ENCODE measurements at regions of chr4 and their contacts with region 1.

Region 1: DNA sequence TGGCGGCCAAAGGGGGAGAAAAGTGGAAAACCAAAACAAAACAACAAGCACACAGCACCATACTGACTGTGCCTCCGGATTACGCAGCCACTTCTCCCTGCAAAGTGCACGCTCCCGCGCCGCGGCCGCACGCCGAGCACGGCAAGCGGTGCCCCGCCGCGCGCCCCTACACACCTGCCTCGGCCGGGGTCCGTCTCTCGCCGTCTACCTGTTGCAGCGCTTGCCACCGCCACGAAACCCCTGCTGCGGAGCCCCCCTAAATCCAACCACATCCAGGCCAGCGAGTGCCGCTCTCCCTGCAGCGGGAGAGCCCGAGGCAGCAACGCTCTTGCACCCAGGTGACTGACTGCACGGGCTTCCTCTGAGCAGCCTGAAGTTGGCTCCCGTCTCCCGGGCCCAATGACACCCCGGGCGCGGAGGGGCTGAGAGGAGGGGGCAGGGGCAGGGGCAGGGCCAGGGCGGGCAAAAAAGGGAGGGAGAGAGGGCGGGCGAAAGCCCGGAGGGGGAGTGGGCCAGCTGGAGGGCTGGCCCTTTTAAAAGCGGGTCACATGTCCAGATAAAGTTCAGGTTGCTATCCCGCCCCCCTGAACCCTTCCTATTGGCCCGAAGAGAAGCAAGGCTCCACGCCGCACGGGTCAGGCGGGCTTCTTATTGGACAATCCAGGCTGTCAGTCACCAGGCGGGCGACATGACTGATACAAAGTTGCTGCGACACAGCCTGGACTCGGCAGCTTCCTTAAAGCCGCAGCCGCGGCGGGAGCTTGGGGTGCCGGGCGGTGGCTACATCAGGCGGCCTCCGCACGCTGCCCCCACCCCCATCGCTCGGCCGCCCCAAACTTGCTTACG is at the start of gene NR3C2:
- DNase-seq: peak; percentile 97
- ATAC-seq: peak; percentile 95
- total RNA-seq, gene NR3C2: 23.6 TPM

Region 2: GRCh38 chr4:147924604-147925412 is 517.4 kb before region 1 on chr4:
- intact Hi-C with region 1: loop called (anchors 10 kb)
- DNase-seq: no peak
- ATAC-seq: no peak

Region 3: DNA sequence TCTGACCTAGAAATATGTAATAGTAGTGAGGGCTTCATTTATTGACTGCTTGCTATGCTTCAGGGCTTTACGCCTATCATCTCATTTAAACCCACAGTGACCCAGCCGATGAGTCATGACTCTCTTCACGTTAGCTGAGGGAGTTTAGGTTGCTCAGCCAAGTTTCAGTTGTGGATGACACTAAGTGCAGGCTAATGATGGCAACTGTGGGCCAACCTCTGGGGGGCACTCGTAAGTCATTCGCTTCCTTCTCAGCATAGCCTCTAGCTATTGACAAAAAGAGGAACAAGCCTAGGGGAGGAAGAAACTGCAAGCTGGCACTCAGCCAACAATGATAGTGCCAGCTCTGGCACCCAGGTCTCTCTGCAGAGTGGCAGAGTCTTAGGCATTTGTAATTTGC is 385.3 kb before region 1 on chr4:
- intact Hi-C with region 1: loop called (anchors 10 kb)
- DNase-seq: no peak
- ATAC-seq: no peak

Region 4: GRCh38 chr4:148216866-148217814 is 225.1 kb before region 1 on chr4:
- intact Hi-C with region 1: loop called (anchors 10 kb)
- DNase-seq: no peak
- ATAC-seq: no peak

Region 5: GRCh38 chr4:148288448-148288847 is 153.8 kb before region 1 on chr4:
- intact Hi-C with region 1: loop called (anchors 2 kb)
- DNase-seq: peak; percentile 70
- ATAC-seq: peak; percentile 73

Region 6: DNA sequence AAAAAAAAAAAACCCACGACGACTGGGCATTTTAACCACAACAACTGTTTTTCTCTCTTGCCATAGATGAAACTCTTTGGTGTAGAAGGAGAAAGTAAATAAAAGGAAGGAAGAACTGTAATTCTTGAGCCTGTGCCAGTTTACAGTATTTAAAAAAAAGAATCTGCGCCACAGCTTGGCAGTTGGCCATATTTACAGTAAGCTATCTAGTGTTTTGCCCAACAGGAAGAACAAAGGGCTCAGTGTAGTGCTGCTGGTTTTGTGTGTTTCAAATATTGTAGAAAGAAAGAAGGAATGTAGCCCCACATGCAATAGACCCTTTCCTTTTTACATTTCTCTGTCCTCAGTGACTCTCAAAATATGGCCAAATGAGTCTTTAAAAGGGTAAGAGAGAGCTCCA is 66.1 kb before region 1 on chr4:
- intact Hi-C with region 1: loop called (anchors 5 kb)
- DNase-seq: no peak
- ATAC-seq: peak; percentile 56

Region 7: DNA sequence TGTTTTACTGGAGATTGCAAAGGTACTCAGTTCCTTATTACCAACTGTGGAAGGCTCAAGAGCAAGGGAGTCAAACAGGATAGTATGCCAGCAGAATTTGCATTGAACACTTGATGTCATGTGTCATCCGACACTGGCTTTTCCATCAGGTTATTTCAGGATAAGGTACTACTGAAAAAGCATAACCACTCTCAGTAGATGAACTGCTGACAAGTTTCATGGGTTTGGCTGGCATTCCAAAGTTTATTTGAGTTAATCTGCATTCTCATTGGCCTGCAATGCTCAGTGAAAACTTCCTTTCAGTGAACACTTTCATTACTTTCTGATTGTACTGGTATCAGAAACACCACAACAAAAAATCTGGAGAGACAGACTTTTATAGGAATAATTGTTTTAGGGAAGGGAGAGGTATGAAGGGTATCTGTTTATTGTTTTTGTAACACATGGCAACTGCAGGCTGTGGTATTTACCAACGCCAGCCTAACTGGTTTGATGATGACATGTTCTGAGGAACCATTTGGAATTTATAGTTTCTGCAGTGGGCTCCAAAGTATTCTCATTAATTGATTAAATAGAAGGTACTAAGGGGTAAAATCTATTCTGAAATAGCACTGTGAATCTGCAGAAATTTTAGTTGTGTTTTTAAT is 345.7 kb after region 1 on chr4:
- intact Hi-C with region 1: loop called (anchors 10 kb)
- DNase-seq: no peak
- ATAC-seq: peak; percentile 92

Measured in Right ventricle myocardium inferior (tissue), 1 donor.